Caco-2 (cell line): ENCODE measurements at regions of chr21 and their contacts with region 1.

Region 1: GRCh38 chr21:29091032-29091431 is 17.6 kb upstream of the CCT8 start:
- DNase-seq: no peak
- H3K4me3 ChIP-seq: no peak overlapping the region
- H3K4me3 Mint-ChIP-seq: no peak overlapping the region
- H3K27ac Mint-ChIP-seq: no peak overlapping the region
- H3K4me1 ChIP-seq: no peaks in the 10 kb centered on the region
- H3K4me1 Mint-ChIP-seq: peaks cover under 1% of the 10 kb centered on the region
- H3K27me3 ChIP-seq: no peaks in the 10 kb centered on the region
- H3K27me3 Mint-ChIP-seq: no peaks in the 10 kb centered on the region
- CTCF ChIP-seq: no peak

Region 2: GRCh38 chr21:28793043-28793442 is 298.0 kb before region 1 on chr21:
- CTCF ChIA-PET with region 1: no interaction called
- POLR2A ChIA-PET with region 1: no interaction called
- intact Hi-C with region 1: no loop called
- DNase-seq: no peak
- H3K4me3 ChIP-seq: no peak overlapping the region
- H3K4me3 Mint-ChIP-seq: no peak overlapping the region
- H3K27ac Mint-ChIP-seq: no peak overlapping the region
- H3K4me1 ChIP-seq: no peaks in the 10 kb centered on the region
- H3K4me1 Mint-ChIP-seq: no peaks in the 10 kb centered on the region
- H3K27me3 ChIP-seq: no peaks in the 10 kb centered on the region
- H3K27me3 Mint-ChIP-seq: peaks cover 3% of the 10 kb centered on the region
- CTCF ChIP-seq: peak; percentile 19 to 27

Region 3: DNA sequence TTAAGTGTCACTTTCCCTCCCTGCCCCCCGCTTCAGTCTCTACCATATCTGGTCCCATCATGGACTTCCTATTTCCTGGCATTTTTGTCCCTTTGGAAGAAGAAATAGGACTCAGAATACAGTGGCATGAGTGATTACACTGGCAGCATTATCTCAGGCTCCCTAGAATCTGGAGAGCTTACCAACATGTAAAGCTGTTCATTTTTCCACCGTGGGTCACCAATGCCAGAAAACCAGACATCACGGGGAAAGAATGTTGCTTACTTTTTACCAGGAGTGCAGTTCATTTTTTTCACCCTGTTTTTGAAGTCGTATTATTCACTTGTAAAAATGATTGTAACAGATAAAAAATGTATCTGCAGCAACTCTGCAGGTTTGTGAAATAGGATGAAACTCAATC is 252.5 kb after region 1 on chr21:
- CTCF ChIA-PET with region 1: no interaction called
- POLR2A ChIA-PET with region 1: no interaction called
- intact Hi-C with region 1: loop called (anchors 1 kb)
- DNase-seq: no peak
- H3K4me3 ChIP-seq: no peak overlapping the region
- H3K4me3 Mint-ChIP-seq: no peak overlapping the region
- H3K27ac Mint-ChIP-seq: no peak overlapping the region
- H3K4me1 ChIP-seq: peaks cover 18% of the 10 kb centered on the region
- H3K4me1 Mint-ChIP-seq: peaks cover 15% of the 10 kb centered on the region
- H3K27me3 ChIP-seq: no peaks in the 10 kb centered on the region
- H3K27me3 Mint-ChIP-seq: no peaks in the 10 kb centered on the region
- CTCF ChIP-seq: no peak

Region 4: DNA sequence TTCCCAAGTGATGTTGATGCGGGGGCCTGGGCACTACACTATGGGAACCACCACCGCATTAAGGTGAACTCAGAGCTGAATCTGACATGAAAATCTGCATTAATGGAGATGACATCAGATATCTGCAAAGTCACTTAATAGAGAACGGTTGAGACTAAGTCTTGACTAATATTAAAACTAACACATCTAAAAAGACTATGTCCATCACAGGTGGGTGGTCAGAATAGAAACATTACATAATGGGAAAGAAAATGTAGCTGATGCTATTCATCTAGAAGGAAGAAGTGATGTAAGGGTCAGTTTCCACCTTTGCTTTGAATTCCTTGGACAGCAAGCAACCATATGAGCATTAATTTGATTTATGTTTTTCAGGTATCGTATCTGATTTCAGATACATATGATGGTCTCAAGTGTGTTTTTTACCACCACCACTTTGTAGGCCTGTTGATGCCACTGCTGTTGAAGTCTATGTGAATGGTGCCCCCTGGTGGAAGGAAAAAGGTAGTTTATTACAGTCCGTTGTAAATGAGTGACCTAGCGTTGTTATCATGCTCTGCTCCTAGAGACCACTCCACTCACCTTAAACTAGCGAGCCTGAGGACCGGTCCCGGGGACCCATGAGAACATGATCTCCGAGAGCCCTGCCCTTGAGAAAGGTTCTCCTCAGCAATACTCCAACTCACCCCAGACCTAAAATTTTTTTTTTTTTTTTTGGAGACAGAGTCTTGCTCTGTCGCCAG is 281.2 kb after region 1 on chr21:
- CTCF ChIA-PET with region 1: interaction called, 3 read pairs
- POLR2A ChIA-PET with region 1: no interaction called
- intact Hi-C with region 1: loop called (anchors 1 kb)
- DNase-seq: peak; percentile 56 to 72
- H3K4me3 ChIP-seq: no peak overlapping the region
- H3K4me3 Mint-ChIP-seq: no peak overlapping the region
- H3K27ac Mint-ChIP-seq: no peak overlapping the region
- H3K4me1 ChIP-seq: no peaks in the 10 kb centered on the region
- H3K4me1 Mint-ChIP-seq: no peaks in the 10 kb centered on the region
- H3K27me3 ChIP-seq: no peaks in the 10 kb centered on the region
- H3K27me3 Mint-ChIP-seq: no peaks in the 10 kb centered on the region
- CTCF ChIP-seq: peak; percentile 45 to 58